Astrocyte of the cerebellum (primary cell): ENCODE measurements at regions of chr5 and their contacts with region 1.

Region 1: DNA sequence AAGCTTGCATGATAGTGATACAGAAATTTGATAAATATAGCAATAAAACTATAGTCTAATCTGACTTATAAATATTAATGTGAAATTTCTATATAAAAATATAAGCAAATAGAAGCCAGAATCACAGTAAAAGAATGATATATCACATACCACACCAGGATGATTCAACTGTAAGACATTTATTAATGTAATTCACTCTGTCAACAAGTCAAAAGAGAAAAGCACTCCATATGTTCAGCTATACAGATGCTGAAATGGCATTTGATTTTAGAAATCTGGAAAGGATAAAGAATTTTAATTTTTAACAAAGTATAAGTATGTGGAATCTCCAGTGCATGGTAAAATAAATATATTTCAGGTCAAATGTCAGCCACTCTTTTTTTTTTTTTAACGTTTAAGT is 372.4 kb downstream of the KCNN2 start:
- DNase-seq: no peak
- H3K4me3 ChIP-seq: no peak overlapping the region
- CTCF ChIP-seq: no peak

Region 2: GRCh38 chr5:114695292-114695904 is 38.8 kb before region 1 on chr5:
- in situ Hi-C with region 1: loop called (anchors 5 kb)
- DNase-seq: no peak
- H3K4me3 ChIP-seq: no peak overlapping the region
- CTCF ChIP-seq: no peak